Right ventricle myocardium superior (tissue), 1 donor: ENCODE measurements at regions of chr10 and their contacts with region 1.

Region 1: DNA sequence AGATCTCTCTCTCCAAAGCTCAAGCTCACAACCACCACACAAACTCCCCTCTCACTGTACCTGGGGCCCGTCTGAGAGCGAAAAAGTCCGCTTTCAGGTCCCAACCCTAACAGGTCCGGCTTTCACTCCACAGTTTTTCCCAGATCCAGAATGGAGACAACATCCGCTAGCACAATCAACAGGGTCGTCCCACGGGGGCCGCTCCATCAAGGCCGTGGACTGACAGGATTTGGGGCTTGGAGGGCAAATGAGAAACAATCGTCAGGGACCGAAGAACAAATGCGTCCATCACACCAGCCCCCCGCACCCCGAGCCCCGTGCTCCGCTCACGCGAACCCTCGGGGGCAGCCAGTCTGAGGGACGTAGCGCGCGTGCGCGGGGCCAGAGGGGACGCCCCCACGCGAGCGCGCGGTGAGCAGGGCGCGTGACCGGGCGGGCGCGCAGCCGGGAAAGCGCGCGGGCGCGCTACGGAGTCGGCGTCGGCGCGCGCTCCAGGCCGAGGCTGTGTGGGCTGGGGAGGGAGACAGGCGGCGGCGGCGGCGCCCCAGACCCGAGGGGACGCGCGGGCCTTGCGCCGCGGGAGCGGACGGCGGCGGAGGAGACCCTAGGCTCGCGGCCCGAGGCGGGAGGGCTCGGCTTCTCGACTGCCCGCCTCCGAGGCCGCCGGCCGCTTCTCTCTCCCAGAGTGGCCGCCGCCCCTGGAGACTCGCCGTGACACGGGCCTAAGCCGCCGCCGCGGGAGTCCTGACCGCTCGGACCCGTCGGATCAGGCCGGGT is at the start of gene SLK:
- DNase-seq: peak; percentile 91
- ATAC-seq: peak; percentile 98
- total RNA-seq, gene SLK: 28.1 TPM

Region 2: DNA sequence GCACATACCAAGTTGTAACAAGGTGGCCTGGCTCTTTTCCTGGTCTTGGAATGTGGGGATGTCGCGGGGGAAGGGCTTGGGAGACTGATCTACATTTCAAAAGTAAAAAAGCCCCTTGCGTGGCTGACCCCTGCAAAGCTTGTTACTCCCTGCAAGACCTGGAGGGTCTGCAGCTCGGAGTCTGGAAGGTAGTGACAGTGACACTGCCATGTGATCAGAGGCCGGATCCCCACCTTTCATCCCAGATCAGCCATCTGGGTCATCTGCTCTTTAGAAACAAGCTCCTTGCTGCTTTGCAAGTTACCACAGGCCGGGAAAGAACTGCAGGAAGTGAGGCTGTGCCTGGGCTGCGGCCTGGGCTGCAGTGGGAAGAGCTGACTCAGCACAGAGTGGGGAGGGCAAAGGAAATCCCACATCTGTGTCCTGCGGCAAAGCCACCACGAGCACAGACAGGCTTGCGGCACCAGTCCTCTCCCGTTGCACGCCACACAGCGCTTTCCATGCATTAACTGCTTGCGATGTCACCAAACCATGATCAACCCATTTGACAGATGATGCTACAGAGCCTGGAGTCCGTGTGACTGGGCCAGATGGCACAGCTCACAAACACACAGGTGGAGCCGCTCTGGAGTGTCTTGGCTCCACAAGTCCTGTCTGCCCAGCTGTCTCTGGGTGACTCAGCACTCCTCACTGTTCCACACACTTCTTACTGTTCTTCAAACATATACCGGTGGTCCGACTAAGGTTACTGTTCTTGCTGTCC is 209.1 kb before region 1 on chr10:
- intact Hi-C with region 1: no loop called
- DNase-seq: peak; percentile 75
- ATAC-seq: peak; percentile 47

Region 3: DNA sequence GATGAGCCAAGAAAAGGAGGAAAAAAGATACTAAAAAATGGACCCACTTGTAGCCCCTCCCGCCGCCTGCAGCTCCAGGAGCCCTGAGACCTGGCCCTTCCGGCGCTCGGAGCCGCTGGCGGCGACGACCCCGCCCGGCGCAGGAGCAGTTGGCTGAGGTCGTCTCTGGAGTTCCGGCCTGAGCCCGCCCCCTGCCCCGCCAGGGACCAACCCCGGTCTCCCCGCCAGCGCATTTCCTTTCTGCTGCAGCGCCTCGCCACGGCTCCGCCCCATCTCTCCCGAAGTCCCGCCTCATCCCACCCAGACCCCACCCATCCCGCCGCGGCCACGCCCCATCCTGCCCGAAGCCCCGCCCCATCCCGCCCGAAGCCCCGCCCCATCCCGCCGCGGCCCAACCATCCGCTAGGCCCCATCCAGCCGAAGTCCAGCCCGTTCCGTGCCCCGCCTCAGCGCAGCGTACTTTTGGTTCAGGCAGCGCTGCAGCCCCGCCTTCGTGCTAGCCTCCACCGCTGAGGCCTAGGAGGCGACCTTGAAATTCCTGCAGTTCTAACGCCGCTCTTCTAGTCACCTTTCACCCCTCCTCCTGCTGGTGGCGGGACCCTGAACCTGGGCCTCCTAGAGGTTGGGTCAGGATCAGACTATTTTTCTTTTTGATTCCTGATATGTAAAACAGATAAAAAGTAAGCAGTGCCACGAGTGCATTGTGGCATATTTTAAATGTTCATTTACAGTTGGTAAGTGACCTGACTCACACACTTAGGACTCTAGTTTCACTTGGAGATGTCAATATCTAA is 48.6 kb before region 1 on chr10 and contains the start of gene STN1:
- intact Hi-C with region 1: loop called (anchors 2 kb)
- DNase-seq: peak; percentile 98
- ATAC-seq: peak; percentile 98
- total RNA-seq, gene STN1: 29.7 TPM